ENCODE measurements at regions of chr2 and their contacts with region 1.

Region 1: GRCh38 chr2:177148477-177149154 is 64.0 kb upstream of the HNRNPA3 start:
- DNase-seq: peak; percentile 65
- H3K4me3 Mint-ChIP-seq: peak overlapping the region; percentile 90
- H3K27ac Mint-ChIP-seq: no peak overlapping the region
- H3K4me1 Mint-ChIP-seq: peaks cover 15% of the 10 kb centered on the region
- H3K27me3 Mint-ChIP-seq: peaks cover 72% of the 10 kb centered on the region

Region 2: GRCh38 chr2:176454893-176455811 is 693.5 kb before region 1 on chr2:
- intact Hi-C with region 1: loop called (anchors 10 kb)
- DNase-seq: peak; percentile 60
- H3K4me3 Mint-ChIP-seq: no peak overlapping the region
- H3K27ac Mint-ChIP-seq: no peak overlapping the region
- H3K4me1 Mint-ChIP-seq: peaks cover 2% of the 10 kb centered on the region
- H3K27me3 Mint-ChIP-seq: peaks cover 41% of the 10 kb centered on the region

Region 3: DNA sequence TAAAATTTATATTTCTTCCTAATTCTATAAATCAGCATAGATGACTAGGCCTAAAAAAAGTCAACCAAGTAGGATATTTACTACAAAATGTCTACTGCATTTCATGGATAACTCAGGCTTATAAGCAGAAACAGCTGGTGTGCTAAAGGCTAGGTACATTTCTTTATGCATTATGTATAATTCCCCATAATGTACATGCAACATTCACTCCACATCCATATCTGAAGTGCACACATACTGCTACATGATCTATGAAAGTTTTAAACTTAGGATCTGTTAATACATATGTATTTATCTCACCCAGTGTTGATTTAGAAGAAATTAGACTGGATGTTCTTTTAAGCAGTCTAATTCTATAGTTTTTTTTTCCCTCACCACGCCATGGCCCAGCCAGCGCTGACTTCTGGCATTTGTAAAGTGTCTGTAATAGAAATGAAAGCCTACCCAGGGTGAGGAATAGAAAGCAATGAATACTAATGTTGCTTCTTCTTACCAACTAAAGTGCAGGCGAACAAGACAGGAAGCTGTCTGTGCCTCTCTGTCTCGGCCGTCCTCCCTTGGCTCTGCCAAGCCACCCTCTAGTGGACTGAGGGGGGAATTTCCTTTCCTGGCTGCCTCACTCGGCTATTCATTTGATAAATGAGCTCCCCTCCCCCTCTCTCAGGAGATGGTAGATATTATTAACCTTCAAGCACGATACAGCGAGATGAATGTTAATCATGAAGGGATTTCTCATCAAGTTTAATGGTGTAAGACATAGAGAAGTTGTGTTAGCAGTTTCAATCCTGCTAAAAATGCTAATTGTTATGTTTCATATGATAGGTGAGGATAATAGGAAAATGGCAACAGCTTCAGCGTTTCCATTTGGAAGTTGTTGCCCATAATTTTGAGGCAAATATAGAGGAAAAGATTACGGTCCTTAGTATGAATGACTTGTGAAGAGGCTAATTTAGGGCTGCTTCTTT is 494.9 kb before region 1 on chr2:
- intact Hi-C with region 1: loop called (anchors 5 kb)
- DNase-seq: peak; percentile 11
- H3K4me3 Mint-ChIP-seq: no peak overlapping the region
- H3K27ac Mint-ChIP-seq: no peak overlapping the region
- H3K4me1 Mint-ChIP-seq: peaks cover 12% of the 10 kb centered on the region
- H3K27me3 Mint-ChIP-seq: peaks cover 52% of the 10 kb centered on the region

Region 4: GRCh38 chr2:176826984-176827668 is 321.5 kb before region 1 on chr2:
- intact Hi-C with region 1: loop called (anchors 5 kb)
- DNase-seq: no peak
- H3K4me3 Mint-ChIP-seq: no peak overlapping the region
- H3K27ac Mint-ChIP-seq: peak overlapping the region; percentile 73
- H3K4me1 Mint-ChIP-seq: peaks cover 26% of the 10 kb centered on the region
- H3K27me3 Mint-ChIP-seq: peaks cover 14% of the 10 kb centered on the region

Region 5: GRCh38 chr2:176997074-176997791 is 151.4 kb before region 1 on chr2:
- intact Hi-C with region 1: loop called (anchors 5 kb)
- DNase-seq: no peak
- H3K4me3 Mint-ChIP-seq: no peak overlapping the region
- H3K27ac Mint-ChIP-seq: peak overlapping the region; percentile 78
- H3K4me1 Mint-ChIP-seq: peaks cover 24% of the 10 kb centered on the region
- H3K27me3 Mint-ChIP-seq: peaks cover 10% of the 10 kb centered on the region

Region 6: DNA sequence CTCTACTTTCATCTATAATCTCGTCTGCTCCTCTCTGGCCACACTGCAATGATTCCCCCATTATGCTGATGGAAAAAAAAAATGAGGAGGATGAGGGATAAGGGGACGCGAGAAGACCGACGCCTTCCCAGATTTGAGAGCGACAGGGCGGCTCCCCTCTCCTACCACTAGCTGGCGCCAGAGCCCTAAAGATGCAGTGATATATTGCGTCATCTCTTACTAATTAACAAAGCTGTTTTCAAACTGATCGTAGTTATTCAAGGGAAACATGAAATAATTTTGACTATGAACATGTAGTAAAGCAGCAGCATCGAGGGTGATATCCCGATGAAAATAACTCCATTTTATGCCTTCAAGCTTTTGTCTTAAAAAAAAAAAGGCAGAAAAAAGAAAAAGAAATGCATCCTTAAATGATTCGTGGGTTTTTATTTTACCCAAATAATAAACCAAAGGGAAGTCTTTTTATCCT is 16.0 kb after region 1 on chr2:
- intact Hi-C with region 1: no loop called
- DNase-seq: peak; percentile 65
- H3K4me3 Mint-ChIP-seq: no peak overlapping the region
- H3K27ac Mint-ChIP-seq: no peak overlapping the region
- H3K4me1 Mint-ChIP-seq: peaks cover 28% of the 10 kb centered on the region
- H3K27me3 Mint-ChIP-seq: peaks cover 6% of the 10 kb centered on the region